Activated naive CD4-positive, alpha-beta T cell treated with anti-CD3 and anti-CD28 coated beads for 36 hours (primary cell): ENCODE measurements at regions of chr1 and their contacts with region 1.

Region 1: GRCh38 chr1:198465201-198466144 is 75.0 kb downstream of the ATP6V1G3 start:
- DNase-seq: no peak
- H3K4me3 Mint-ChIP-seq: no peak overlapping the region
- H3K27ac Mint-ChIP-seq: no peak overlapping the region
- H3K4me1 Mint-ChIP-seq: peaks cover 13% of the 10 kb centered on the region
- H3K27me3 Mint-ChIP-seq: no peaks in the 10 kb centered on the region

Region 2: DNA sequence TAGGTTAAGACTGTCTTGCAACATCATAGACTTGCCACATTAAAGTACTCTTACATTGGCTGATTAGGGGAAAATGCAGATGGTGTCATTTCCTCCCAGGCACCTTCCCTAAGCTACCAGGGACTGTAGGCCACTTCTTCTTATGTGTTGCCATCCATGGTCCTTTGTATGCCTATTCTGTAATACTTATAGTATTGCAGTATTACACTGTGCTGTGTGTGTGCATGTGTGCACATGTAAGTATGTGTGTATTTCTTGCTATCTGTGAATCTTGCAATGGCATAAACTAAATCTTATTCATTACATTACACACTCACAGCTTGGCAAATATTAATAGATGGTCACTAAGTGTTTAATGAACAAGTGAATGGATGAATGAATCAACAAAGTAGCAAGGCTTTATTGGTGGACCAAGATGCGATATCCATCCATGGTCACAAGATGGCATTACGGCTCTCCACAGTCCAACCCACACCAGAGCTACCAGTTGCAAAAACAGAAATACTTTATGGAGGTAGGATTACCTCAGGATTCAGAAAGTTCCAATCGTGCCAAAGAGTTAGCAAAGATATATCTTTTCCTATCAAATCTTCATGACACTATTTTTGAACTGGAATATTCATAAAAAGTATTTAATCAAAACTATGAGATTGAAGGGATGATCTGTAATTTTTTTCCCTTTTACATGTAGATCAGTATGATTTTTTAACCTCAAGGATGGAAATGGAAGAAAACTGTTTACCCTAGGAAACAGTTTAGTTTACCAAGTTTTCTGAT is 850.4 kb before region 1 on chr1:
- CTCF ChIA-PET with region 1: no interaction called
- intact Hi-C with region 1: loop called (anchors 1 kb)
- DNase-seq: peak; percentile 49
- H3K4me3 Mint-ChIP-seq: no peak overlapping the region
- H3K27ac Mint-ChIP-seq: no peak overlapping the region
- H3K4me1 Mint-ChIP-seq: no peaks in the 10 kb centered on the region
- H3K27me3 Mint-ChIP-seq: no peaks in the 10 kb centered on the region

Region 3: GRCh38 chr1:197924516-197925123 is 540.9 kb before region 1 on chr1:
- CTCF ChIA-PET with region 1: no interaction called
- intact Hi-C with region 1: loop called (anchors 1 kb)
- DNase-seq: peak; percentile 58
- H3K4me3 Mint-ChIP-seq: no peak overlapping the region
- H3K27ac Mint-ChIP-seq: no peak overlapping the region
- H3K4me1 Mint-ChIP-seq: peaks cover 15% of the 10 kb centered on the region
- H3K27me3 Mint-ChIP-seq: peaks cover 49% of the 10 kb centered on the region

Region 4: DNA sequence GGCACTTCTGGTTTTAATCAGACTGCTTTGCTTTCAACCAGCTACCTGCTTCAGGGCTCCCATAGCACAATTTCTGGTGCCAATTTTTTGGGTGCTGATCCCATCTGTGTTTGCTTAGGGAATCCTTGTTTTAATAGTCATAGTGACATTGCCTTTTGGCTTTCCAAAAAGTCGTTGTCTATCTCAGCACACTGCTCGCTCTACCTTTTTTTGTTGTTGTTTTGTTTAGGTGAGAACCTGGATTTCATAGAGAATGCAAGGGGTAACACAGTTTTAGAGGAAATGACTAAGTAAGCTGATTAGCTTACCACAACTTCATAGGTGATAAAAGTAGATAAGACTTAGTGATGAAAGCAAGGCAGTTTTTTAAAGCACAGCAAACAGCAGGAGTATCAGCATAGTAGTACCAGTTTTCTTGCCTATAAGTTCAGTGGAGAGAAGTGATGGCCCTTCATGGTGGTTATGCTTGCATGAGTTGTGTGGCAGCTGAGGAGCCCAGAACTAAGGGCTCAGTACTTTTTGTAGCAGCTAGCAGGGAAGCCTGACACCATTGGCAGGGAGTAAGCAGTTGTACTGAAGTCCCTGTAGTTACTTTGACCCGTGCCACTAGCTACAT is 277.4 kb before region 1 on chr1:
- CTCF ChIA-PET with region 1: no interaction called
- intact Hi-C with region 1: loop called (anchors 5 kb)
- DNase-seq: no peak
- H3K4me3 Mint-ChIP-seq: peak overlapping the region; percentile 16
- H3K27ac Mint-ChIP-seq: peak overlapping the region; percentile 20
- H3K4me1 Mint-ChIP-seq: peaks cover 72% of the 10 kb centered on the region
- H3K27me3 Mint-ChIP-seq: no peaks in the 10 kb centered on the region

Region 5: DNA sequence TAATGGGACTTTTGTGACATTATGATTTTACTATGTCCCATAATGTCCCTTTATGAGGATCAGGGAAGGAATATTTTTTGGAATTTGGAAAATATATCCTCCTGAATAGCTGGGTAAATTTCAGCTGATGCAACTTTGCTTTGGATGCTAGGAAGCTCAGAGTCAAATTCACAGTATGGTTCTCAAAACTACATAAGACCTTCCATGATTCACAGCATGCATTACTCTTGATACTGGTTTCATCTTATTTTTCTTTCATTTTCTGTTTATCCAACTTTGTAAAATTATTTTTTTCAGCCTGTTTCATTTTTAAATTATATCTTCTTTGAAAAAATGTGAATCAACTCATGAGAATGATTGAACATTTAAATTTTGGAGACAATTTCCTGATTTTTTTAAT is 85.2 kb before region 1 on chr1:
- CTCF ChIA-PET with region 1: no interaction called
- intact Hi-C with region 1: loop called (anchors 2 kb)
- DNase-seq: no peak
- H3K4me3 Mint-ChIP-seq: no peak overlapping the region
- H3K27ac Mint-ChIP-seq: no peak overlapping the region
- H3K4me1 Mint-ChIP-seq: peaks cover 24% of the 10 kb centered on the region
- H3K27me3 Mint-ChIP-seq: no peaks in the 10 kb centered on the region

Region 6: DNA sequence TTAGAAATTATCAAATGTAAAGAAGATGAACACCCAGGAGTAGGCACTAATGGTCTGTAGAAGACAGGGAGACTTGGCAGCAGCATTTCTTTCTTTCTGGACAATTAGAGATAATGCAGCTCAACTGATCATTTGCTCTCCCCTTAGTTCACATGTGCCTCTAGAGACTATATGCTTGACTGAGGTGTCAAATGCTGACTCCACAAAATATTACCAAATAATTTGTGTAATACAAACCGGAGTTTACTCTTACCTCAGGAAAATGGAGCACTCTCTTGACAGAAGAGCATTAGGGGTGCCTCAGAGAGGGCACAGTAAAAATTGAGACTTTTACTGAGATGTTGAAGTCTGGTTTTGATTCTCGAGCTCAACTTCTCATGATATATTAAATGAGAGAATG is 56.8 kb before region 1 on chr1:
- CTCF ChIA-PET with region 1: no interaction called
- intact Hi-C with region 1: no loop called
- DNase-seq: no peak
- H3K4me3 Mint-ChIP-seq: no peak overlapping the region
- H3K27ac Mint-ChIP-seq: no peak overlapping the region
- H3K4me1 Mint-ChIP-seq: no peaks in the 10 kb centered on the region
- H3K27me3 Mint-ChIP-seq: no peaks in the 10 kb centered on the region

Region 7: GRCh38 chr1:199551967-199552565 is 1086.6 kb after region 1 on chr1:
- CTCF ChIA-PET with region 1: no interaction called
- intact Hi-C with region 1: loop called (anchors 10 kb)
- DNase-seq: peak; percentile 61
- H3K4me3 Mint-ChIP-seq: no peak overlapping the region
- H3K27ac Mint-ChIP-seq: no peak overlapping the region
- H3K4me1 Mint-ChIP-seq: no peaks in the 10 kb centered on the region
- H3K27me3 Mint-ChIP-seq: peaks cover 10% of the 10 kb centered on the region